PC-9 (cell line): ENCODE measurements at regions of chr13 and their contacts with region 1.

Region 1: DNA sequence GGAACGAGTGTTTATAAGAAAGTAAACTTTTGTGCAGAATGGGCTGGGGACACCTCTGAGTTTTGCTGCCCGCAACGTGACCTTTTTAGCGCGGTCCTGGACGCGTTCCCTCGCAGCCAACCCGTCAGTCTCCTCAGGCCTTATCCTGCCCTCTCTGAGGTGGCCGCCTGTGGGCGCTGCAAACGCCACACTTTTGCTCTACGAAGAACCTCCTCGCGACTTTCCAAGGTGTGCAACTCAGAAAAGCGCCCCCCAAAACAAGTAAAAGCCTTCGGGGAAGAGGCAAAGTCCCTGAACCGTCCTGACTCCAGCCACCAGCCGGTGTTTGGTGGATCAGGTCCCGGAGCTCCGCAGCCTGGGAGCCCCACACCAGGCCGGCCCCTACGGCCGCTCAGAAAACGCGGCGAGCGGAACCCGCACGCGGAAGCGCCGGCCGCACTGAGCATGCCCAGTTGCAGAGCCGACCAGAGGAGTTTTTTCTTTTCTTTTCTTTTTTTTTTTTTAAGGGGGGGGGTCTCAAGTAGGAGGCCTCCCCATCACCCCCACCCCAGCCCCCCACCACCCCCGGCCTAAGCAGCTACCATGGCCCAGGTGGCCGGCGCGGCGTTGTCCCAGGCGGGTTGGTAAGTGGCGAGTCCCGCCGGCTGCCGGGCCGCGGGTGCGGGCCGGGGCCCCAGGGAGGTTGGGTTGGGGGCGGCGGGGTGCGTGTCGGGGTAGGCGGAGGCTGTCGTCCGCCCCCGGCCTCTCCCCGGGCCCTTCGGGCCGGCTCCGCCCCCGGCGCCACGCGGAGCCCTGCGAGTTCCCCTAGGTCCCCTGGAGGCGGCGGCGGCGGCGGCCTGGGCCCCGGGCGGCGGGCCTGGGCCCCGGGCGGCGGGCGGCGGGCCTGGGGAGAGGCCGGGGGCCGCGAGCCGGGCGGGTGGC is at the start of gene TDRD3:
- DNase-seq: peak; percentile 68 to 83
- H3K4me3 ChIP-seq: peak within 1 kb of the TSS; percentile 72
- H3K27ac ChIP-seq: peak within 1 kb of the TSS; percentile 77
- H3K4me1 ChIP-seq: peaks cover 16% of the 10 kb centered on the region
- H3K27me3 ChIP-seq: no peaks in the 10 kb centered on the region
- CTCF ChIP-seq: peak; percentile 82
- total RNA-seq, gene TDRD3: 13.9 and 17.3 TPM in 2 replicates

Region 2: GRCh38 chr13:60163478-60164233 is 233.4 kb before region 1 on chr13 and contains the start of gene DIAPH3:
- CTCF ChIA-PET with region 1: no interaction called
- POLR2A ChIA-PET with region 1: no interaction called
- intact Hi-C with region 1: loop called (anchors 5 kb)
- DNase-seq: peak; percentile 89 to 95
- H3K4me3 ChIP-seq: peak within 1 kb of the TSS; percentile 77
- H3K27ac ChIP-seq: peak within 1 kb of the TSS; percentile 60
- H3K4me1 ChIP-seq: peaks cover 27% of the 10 kb centered on the region
- H3K27me3 ChIP-seq: no peaks in the 10 kb centered on the region
- CTCF ChIP-seq: no peak
- total RNA-seq, gene DIAPH3: 26.4 and 39.3 TPM in 2 replicates

Region 3: DNA sequence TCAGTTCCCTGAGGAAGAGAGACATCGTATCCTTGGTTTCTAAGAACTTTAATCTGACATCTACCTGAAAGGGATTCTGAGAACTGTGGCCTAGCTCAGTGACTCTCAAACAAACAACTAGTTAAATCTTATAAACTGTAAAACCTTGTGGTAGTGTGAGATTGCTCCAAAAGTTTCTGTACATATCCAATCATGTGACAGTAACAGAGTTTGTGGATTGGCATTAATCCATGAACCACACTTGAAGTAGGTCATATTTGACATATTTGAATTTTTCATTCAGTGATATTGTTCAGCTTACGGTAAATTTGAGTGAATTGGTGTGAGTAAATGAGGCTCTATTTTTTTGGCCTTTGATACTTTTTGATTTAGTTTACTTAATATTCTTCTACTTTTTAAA is 14.9 kb after region 1 on chr13:
- CTCF ChIA-PET with region 1: no interaction called
- POLR2A ChIA-PET with region 1: no interaction called
- intact Hi-C with region 1: no loop called
- DNase-seq: no peak
- H3K4me3 ChIP-seq: no peak overlapping the region
- H3K27ac ChIP-seq: no peak overlapping the region
- H3K4me1 ChIP-seq: no peaks in the 10 kb centered on the region
- H3K27me3 ChIP-seq: no peaks in the 10 kb centered on the region
- CTCF ChIP-seq: no peak

Region 4: DNA sequence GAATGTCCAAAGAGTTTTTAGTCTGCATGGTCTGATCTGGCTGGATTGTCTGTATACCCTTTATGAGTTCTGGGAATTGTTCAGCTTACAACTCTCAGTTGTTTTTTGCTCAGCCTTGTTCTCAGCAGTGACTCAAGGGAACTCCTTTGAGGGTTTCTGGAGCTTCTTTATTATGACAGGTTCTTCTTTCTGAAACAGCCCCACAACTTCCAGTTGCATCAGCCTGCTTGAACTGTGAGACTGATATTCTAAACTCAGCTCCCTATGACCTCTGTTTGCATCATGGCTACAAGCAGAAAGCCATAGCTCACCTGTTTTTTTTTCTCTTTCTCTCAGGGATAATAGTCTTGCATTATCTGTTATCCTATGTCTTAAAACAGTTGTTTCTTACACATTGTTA is 85.0 kb after region 1 on chr13:
- CTCF ChIA-PET with region 1: no interaction called
- POLR2A ChIA-PET with region 1: no interaction called
- intact Hi-C with region 1: no loop called
- DNase-seq: no peak
- H3K4me3 ChIP-seq: no peak overlapping the region
- H3K27ac ChIP-seq: no peak overlapping the region; the same call in 1 of the 2 replicates
- H3K4me1 ChIP-seq: no peaks in the 10 kb centered on the region
- H3K27me3 ChIP-seq: no peaks in the 10 kb centered on the region
- CTCF ChIP-seq: no peak